Calu3 (cell line): ENCODE measurements at regions of chr10 and their contacts with region 1.

Region 1: GRCh38 chr10:48333856-48334255 is 27.4 kb downstream of the MAPK8 start:
- DNase-seq: no peak
- H3K4me3 Mint-ChIP-seq: no peak overlapping the region
- H3K27ac Mint-ChIP-seq: peak overlapping the region; percentile 18
- H3K4me1 Mint-ChIP-seq: peaks cover 36% of the 10 kb centered on the region
- H3K27me3 Mint-ChIP-seq: no peaks in the 10 kb centered on the region
- CTCF ChIP-seq: no peak

Region 2: GRCh38 chr10:48309711-48310226 is 24.1 kb before region 1 on chr10:
- CTCF ChIA-PET with region 1: interaction called, 5 read pairs
- intact Hi-C with region 1: loop called (anchors 2 kb)
- DNase-seq: no peak
- H3K4me3 Mint-ChIP-seq: peak overlapping the region; percentile 9
- H3K27ac Mint-ChIP-seq: peak overlapping the region; percentile 52
- H3K4me1 Mint-ChIP-seq: peaks cover 38% of the 10 kb centered on the region
- H3K27me3 Mint-ChIP-seq: peaks cover 2% of the 10 kb centered on the region
- CTCF ChIP-seq: no peak

Region 3: GRCh38 chr10:48317321-48317990 is 16.4 kb before region 1 on chr10:
- CTCF ChIA-PET with region 1: no interaction called
- intact Hi-C with region 1: loop called (anchors 2 kb)
- DNase-seq: no peak
- H3K4me3 Mint-ChIP-seq: no peak overlapping the region
- H3K27ac Mint-ChIP-seq: no peak overlapping the region
- H3K4me1 Mint-ChIP-seq: peaks cover 10% of the 10 kb centered on the region
- H3K27me3 Mint-ChIP-seq: no peaks in the 10 kb centered on the region
- CTCF ChIP-seq: no peak

Region 4: GRCh38 chr10:48470115-48470892 is 136.4 kb after region 1 on chr10:
- CTCF ChIA-PET with region 1: no interaction called
- intact Hi-C with region 1: no loop called
- DNase-seq: no peak
- H3K4me3 Mint-ChIP-seq: no peak overlapping the region
- H3K27ac Mint-ChIP-seq: no peak overlapping the region
- H3K4me1 Mint-ChIP-seq: no peaks in the 10 kb centered on the region
- H3K27me3 Mint-ChIP-seq: peaks cover 33% of the 10 kb centered on the region
- CTCF ChIP-seq: no peak

Region 5: DNA sequence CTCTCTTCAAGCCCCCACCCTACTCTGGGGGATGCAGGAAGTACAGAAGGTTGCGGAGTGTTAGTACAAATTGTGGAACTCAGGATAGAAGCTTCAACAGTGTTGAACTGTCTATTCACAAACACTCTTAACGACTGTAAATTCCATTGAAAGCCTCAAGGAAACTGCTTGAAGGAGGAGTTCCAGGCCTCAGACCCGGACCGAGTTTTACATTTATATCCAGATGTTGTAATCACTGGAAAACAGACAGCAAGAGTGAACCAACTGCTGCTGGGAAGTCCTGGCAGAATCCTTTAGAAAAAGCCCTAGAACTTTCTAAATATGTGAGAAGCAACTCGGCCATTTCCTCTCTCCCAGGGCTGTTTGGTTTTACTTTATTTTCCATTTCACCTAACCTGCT is 689.9 kb after region 1 on chr10:
- CTCF ChIA-PET with region 1: no interaction called
- intact Hi-C with region 1: no loop called
- DNase-seq: no peak
- H3K4me3 Mint-ChIP-seq: no peak overlapping the region
- H3K27ac Mint-ChIP-seq: no peak overlapping the region
- H3K4me1 Mint-ChIP-seq: no peaks in the 10 kb centered on the region
- H3K27me3 Mint-ChIP-seq: peaks cover 59% of the 10 kb centered on the region
- CTCF ChIP-seq: no peak